ENCODE measurements at regions of chr2 and their contacts with region 1.

Region 1: DNA sequence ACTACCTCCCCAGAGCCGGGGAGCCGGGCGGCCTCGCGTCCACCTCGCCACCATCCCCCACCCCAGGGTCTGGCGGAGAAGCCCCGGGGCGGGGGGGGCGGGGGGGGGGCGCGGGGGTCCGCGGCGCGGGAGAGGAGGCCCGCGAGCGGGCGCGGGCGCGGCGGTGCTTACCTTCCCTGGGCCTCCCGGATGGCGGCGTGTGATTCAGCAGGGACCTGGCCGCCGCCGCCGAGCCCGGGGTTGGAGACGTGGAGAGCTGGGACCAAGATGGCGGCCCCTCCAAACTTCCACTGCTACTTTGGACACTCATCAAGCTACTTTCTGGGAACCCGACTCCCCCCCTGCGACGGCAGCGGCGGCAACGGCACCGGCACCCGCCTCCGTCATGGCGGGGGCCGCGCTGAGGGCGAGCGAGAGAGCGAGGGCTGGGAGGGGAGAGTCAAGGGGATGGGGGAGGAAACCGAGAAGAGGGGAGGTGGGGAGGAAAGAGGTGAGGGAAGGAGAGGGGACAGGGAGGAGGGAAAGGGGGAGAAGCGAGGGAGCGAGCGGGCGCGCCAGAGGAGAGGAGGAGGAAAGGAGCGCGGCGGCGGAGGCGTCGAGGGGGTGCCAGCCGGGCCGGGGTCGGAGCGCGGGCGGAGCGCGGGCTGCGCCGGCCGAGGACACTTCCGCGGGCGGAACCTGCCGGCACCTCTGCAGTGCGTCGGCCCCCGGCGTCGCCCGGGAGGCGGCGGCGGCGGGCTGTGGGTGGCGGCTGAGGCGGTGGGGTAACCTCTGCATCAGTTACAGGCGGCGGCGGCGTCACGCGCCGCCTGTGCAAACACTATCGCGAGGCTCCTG is at the start of gene TLK1:
- DNase-seq: peak; percentile 62 to 87 (median 72)
- ATAC-seq: peak; percentile 66 to 75
- H3K4me3 Mint-ChIP-seq: peak within 1 kb of the TSS; percentile 91 to 98 (median 96)
- H3K27ac Mint-ChIP-seq: peak within 1 kb of the TSS; percentile 88 to 99 (median 97)
- H3K4me1 Mint-ChIP-seq: peaks cover 29 to 71% (median 60%) of the 10 kb centered on the region in 4 donors
- H3K27me3 Mint-ChIP-seq: no peaks in the 10 kb centered on the region
- polyA plus RNA-seq, gene TLK1: 27.3 to 53.7 (median 34.3) TPM

Region 2: DNA sequence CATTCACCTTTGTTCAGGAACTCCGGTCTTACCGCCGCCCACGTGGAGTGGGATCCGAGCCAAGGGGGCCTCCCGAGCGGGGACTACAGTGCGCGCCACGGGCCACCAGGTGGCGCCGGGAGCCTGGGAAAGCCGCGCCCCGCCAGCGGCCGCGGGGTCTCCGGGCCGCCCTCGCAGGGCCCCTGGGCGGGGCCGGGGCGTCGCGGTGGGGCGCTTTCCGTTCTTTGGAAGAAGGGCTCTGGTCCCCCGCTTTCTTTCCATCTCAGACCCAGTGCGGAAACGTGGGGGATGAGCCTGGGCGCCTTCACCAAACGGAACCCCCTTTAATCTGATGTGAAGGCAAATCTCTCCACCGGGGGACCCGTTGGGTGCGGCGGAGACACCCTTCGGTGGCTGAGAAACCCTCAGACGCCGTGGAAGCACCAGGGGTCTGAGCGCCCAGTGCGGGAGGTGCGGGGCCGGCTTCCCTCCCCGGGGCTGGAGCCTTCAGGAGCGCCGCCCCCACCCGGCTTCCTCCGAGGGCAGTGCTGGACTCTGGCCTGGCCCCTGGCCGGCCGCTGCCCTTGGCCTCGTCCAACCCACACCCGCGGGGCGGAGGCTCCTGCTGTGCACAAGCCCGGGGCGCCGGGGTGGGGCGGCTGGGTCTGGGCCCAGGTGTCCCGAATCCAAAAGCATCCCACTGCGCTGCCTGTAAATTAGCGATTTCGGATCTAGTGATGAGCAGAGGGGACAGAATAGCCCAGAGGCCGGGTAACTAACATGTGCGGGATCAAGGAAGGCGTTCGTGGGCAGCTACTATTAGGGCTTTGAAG is 186.6 kb before region 1 on chr2:
- POLR2A ChIA-PET with region 1: interaction called, 33 read pairs
- DNase-seq: peak; percentile 81 to 94 (median 91)
- ATAC-seq: peak; percentile 89 to 96
- H3K4me3 Mint-ChIP-seq: peak overlapping the region; percentile 71 to 89 (median 83)
- H3K27ac Mint-ChIP-seq: peak overlapping the region in 9 of 10 donors; percentile 54 to 90 (median 86)
- H3K4me1 Mint-ChIP-seq: peaks cover 4 to 10% (median 8%) of the 10 kb centered on the region in 4 donors
- H3K27me3 Mint-ChIP-seq: no peaks in the 10 kb centered on the region

Region 3: GRCh38 chr2:171056307-171056706 is 104.0 kb before region 1 on chr2:
- POLR2A ChIA-PET with region 1: no interaction called
- DNase-seq: no peak
- ATAC-seq: no peak
- H3K4me3 Mint-ChIP-seq: no peak overlapping the region
- H3K27ac Mint-ChIP-seq: peak overlapping the region in 2 of 10 donors; percentile 6 to 70
- H3K4me1 Mint-ChIP-seq: peaks cover 2 to 4% (median 3%) of the 10 kb centered on the region in 4 donors
- H3K27me3 Mint-ChIP-seq: no peaks in the 10 kb centered on the region

Region 4: DNA sequence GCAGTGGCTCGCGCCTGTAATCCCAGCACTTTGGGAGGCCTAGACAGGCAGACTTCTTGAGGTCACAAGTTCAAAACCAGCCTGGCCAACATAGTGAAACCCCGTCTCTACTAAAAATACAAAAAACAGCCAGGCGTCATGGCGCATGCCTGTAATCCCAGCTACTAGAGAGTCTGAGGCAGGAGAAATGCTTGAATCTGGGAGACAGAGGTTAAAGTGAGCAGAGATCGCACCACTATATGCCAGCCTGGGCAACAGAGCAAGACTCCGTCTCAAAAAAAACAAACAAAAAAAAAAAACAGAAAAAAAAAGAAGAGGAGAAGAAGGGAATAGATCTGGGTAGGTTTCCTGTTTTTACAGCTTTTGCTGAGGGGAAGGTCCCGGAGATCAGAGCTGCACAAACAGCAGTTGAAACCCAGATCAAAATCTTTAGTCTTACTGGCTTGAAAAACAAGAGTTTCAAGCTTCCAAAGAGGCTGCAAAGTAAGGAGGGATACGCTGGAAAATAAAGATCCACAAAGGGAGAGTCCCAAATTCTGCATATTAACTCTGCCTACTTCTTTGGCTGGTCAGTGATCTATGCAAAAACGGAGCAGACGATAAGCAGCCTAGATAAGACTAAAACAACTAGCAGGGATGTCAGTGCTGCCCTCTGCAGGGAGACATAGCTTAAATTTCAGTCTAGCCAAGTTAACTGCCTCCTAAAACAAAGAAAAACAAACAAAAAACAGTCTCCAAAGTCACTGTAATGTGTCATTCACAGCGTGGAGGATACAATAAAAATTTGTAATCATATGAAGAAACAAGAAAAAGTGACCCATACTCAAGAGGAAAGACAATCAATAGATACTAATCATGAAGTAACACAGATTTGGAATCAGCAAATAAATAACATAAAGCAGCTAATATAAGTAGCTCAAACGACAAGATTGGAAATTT is 73.7 kb before region 1 on chr2:
- POLR2A ChIA-PET with region 1: interaction called, 19 read pairs
- DNase-seq: peak; percentile 17 to 69 (median 52)
- ATAC-seq: peak; percentile 70 to 80
- H3K4me3 Mint-ChIP-seq: peak overlapping the region; percentile 83 to 97 (median 86)
- H3K27ac Mint-ChIP-seq: peak overlapping the region; percentile 87 to 98 (median 94)
- H3K4me1 Mint-ChIP-seq: peaks cover 30 to 69% (median 65%) of the 10 kb centered on the region in 4 donors
- H3K27me3 Mint-ChIP-seq: no peaks in the 10 kb centered on the region

Region 5: DNA sequence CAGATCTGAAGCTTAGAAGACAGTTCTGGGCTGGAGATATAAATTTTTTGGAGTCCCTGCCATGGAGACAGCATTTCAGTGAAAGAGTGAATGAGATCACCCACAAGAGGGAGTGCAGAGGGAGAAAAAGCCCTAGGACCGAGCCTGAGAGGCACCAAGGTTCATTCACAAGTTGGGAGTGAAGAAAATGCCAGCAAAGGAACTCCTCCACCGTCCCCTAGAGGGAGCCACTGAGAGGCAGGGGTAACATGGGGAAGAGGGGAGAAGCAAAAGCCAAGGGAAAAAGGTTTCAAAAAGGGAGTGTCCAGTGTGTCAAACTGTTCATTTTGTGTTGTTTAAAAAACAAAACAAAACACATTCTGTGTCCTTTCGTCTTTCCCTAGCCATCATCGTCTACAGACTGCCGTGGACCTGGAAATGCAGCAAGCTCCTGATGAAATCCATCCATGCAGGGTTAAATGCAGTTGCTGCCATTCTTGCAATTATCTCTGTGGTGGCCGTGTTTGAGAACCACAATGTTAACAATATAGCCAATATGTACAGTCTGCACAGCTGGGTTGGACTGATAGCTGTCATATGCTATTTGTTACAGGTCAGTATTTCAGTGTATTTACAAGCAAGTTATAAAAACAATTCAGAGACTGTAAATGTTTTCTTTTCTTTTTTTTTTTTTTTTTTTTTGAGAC is 381.0 kb after region 1 on chr2:
- POLR2A ChIA-PET with region 1: no interaction called
- DNase-seq: no peak
- ATAC-seq: no peak
- H3K4me3 Mint-ChIP-seq: no peak overlapping the region
- H3K27ac Mint-ChIP-seq: no peak overlapping the region
- H3K4me1 Mint-ChIP-seq: no peaks in the 10 kb centered on the region
- H3K27me3 Mint-ChIP-seq: peaks cover 3 to 7% (median 6%) of the 10 kb centered on the region in 5 donors

Measured in naive thymus-derived CD8-positive, alpha-beta T cell (primary cell).